HepG2 (cell line): ENCODE measurements at regions of chr20 and their contacts with region 1.

Region 1: GRCh38 chr20:35463455-35464300 is 8.3 kb downstream of the CEP250 start:
- DNase-seq: peak; percentile 84
- ATAC-seq: peak; percentile 79
- H3K4me3 ChIP-seq: no peak overlapping the region
- H3K27ac ChIP-seq: peak overlapping the region; percentile 14
- H3K4me1 ChIP-seq: peaks cover 42% of the 10 kb centered on the region
- H3K27me3 ChIP-seq: no peaks in the 10 kb centered on the region
- CTCF ChIP-seq: peak; percentile 95
- EP300 ChIP-seq: no peak
- POLR2A ChIP-seq: no peak
- RAD21 ChIP-seq: peak; percentile 92

Region 2: GRCh38 chr20:35200255-35200654 is 263.4 kb before region 1 on chr20:
- CTCF ChIA-PET with region 1: no interaction called
- POLR2A ChIA-PET with region 1: no interaction called
- in situ Hi-C with region 1: no loop called
- intact Hi-C with region 1: no loop called
- DNase-seq: no peak
- ATAC-seq: no peak
- H3K4me3 ChIP-seq: no peak overlapping the region
- H3K27ac ChIP-seq: no peak overlapping the region
- H3K4me1 ChIP-seq: no peaks in the 10 kb centered on the region
- H3K27me3 ChIP-seq: no peaks in the 10 kb centered on the region
- CTCF ChIP-seq: no peak
- EP300 ChIP-seq: no peak
- POLR2A ChIP-seq: no peak
- RAD21 ChIP-seq: no peak

Region 3: GRCh38 chr20:35447082-35447789 is 16.4 kb before region 1 on chr20:
- CTCF ChIA-PET with region 1: no interaction called
- POLR2A ChIA-PET with region 1: no interaction called
- in situ Hi-C with region 1: no loop called
- intact Hi-C with region 1: no loop called
- DNase-seq: peak; percentile 92
- ATAC-seq: peak; percentile 90
- H3K4me3 ChIP-seq: peak overlapping the region; percentile 51 to 61 (median 55)
- H3K27ac ChIP-seq: no peak overlapping the region
- H3K4me1 ChIP-seq: peaks cover 8% of the 10 kb centered on the region
- H3K27me3 ChIP-seq: no peaks in the 10 kb centered on the region; a peak in 2 of 5 replicates
- CTCF ChIP-seq: peak; percentile 95
- EP300 ChIP-seq: no peak
- POLR2A ChIP-seq: peak in 1 of 2 experiments; percentile 48; a peak in 2 of 4 replicates
- RAD21 ChIP-seq: peak; percentile 75

Region 4: DNA sequence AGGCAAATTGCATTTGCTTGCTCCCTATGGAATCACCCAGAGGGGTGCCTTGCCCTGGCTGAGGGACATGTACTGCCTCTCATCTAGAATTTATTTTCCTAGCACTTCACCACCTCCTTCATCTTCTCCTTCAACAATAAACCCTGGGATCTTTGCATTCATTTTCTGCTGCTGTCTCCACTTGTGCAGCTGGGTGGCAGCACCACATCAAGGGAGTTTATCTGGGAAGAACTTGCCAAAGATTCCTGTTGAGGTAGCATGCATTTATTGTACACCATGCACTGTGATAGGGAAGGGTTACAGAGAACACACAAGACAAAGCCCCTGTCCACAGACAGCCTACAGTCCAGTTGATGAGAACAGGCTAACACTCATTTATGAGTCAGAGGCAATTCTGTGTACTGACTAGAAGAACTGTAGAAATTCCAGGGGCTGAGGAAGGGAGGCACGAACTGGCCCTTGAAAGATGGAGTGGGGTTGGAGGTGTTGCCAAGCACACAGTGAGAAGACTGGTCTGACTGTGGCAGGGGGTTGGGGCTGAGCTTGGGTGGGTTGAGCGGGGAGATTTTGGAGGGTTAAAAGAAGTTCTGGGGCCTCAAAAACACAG is 48.2 kb after region 1 on chr20:
- CTCF ChIA-PET with region 1: no interaction called
- POLR2A ChIA-PET with region 1: interaction called, 3 read pairs
- in situ Hi-C with region 1: no loop called
- intact Hi-C with region 1: loop called (anchors 2 kb)
- DNase-seq: peak; percentile 53
- ATAC-seq: peak; percentile 32
- H3K4me3 ChIP-seq: no peak overlapping the region
- H3K27ac ChIP-seq: no peak overlapping the region
- H3K4me1 ChIP-seq: no peaks in the 10 kb centered on the region
- H3K27me3 ChIP-seq: no peaks in the 10 kb centered on the region
- CTCF ChIP-seq: peak; percentile 88
- EP300 ChIP-seq: no peak
- POLR2A ChIP-seq: no peak
- RAD21 ChIP-seq: peak; percentile 49; the same call in 1 of the 2 replicates

Region 5: DNA sequence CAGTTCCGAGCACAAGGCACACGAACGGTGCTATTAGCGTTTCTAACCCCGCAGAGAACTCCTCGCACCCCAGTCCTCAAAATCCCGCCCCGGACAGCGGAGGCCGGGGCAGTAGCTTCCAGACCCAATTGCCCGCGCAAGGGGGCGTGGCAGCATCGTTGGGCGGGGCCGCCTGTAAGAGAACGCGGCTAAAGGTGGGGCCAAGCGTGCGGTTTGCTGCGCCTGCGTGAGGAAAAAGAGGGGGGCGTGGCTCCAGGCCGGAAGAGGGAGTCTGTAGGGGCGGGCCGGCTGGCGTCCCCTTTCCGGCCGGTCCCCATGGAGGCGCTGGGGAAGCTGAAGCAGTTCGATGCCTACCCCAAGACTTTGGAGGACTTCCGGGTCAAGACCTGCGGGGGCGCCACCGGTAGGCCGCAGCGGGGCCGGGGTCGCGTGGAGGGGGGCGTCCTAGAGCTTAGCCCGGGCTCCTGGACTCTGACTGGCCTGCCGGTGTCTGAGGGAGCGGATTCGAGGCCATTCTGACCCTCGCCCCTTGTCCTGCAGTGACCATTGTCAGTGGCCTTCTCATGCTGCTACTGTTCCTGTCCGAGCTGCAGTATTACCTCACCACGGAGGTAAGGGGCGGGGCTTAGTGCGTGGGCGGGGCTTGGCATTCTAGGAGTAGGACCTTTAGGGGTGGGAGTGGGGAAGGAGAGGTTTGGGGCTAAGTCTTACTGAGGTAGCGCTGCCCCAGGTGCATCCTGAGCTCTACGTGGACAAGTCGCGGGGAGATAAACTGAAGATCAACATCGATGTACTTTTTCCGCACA is 78.3 kb after region 1 on chr20 and contains the start of gene ERGIC3:
- CTCF ChIA-PET with region 1: no interaction called
- POLR2A ChIA-PET with region 1: interaction called, 37 read pairs
- in situ Hi-C with region 1: no loop called
- intact Hi-C with region 1: loop called (anchors 5 kb)
- DNase-seq: peak; percentile 97
- ATAC-seq: peak; percentile 93
- H3K4me3 ChIP-seq: peak within 1 kb of the TSS; percentile 74 to 93 (median 79)
- H3K27ac ChIP-seq: peak within 1 kb of the TSS; percentile 85
- H3K4me1 ChIP-seq: peaks cover 29% of the 10 kb centered on the region
- H3K27me3 ChIP-seq: no peaks in the 10 kb centered on the region
- CTCF ChIP-seq: peak; percentile 43; the same call in 1 of the 2 replicates
- EP300 ChIP-seq: no peak
- POLR2A ChIP-seq: peak; percentile 82 to 92
- RAD21 ChIP-seq: no peak; the same call in 1 of the 2 replicates
- total RNA-seq, gene ERGIC3: 224 and 407 TPM in 2 replicates

Region 6: GRCh38 chr20:35619196-35620095 is 155.8 kb after region 1 on chr20:
- CTCF ChIA-PET with region 1: no interaction called
- POLR2A ChIA-PET with region 1: interaction called, 34 read pairs
- in situ Hi-C with region 1: no loop called
- intact Hi-C with region 1: loop called (anchors 2 kb)
- DNase-seq: peak; percentile 94
- ATAC-seq: peak; percentile 69
- H3K4me3 ChIP-seq: peak overlapping the region; percentile 59 to 96 (median 67)
- H3K27ac ChIP-seq: peak overlapping the region; percentile 0
- H3K4me1 ChIP-seq: peaks cover 26% of the 10 kb centered on the region
- H3K27me3 ChIP-seq: peaks cover 0 to 7% of the 10 kb centered on the region in 2 experiments; a peak in 1 of 5 replicates
- CTCF ChIP-seq: peak; percentile 93
- EP300 ChIP-seq: peak in 1 of 2 experiments; percentile 32; a peak in 1 of 4 replicates
- POLR2A ChIP-seq: peak in 1 of 2 experiments; percentile 74; a peak in 2 of 4 replicates
- RAD21 ChIP-seq: peak; percentile 78

Region 7: DNA sequence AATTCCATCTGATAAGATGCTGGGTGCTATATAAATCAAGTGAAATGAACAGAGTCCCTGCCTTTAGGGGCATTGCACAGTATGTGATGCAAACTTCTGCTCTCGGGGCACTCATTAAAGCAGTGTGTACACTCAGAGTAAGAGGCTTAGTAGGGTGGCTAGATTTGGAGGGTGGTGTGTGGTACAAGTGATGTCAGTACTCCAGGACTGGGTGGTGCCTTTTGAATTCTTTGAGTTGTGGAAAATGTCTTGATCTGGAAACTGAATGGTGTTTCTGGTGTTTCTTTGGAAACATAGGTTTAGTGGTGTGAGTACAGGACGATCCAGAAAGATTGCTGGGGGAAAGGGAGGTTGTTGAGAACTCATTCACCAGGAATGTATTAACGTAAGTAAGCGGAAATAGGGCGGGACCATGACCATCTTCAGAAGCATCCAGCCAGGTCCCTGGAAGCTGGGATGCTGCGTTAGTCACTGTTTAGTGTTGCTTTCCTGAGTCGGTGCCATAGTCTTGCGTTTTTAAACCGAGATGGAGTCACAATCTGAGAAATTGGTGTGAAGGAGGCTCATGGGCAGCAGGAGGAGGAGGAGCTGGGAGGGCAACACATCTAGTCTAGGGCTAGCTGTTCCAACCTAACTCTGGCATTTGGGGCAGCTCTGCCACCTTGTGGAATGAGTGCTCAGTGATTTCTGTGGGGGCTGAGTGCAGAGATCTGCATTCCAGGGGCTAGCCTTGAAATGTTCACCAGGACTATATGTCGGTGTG is 420.3 kb after region 1 on chr20:
- CTCF ChIA-PET with region 1: no interaction called
- POLR2A ChIA-PET with region 1: no interaction called
- in situ Hi-C with region 1: no loop called
- intact Hi-C with region 1: loop called (anchors 5 kb)
- DNase-seq: peak; percentile 82
- ATAC-seq: peak; percentile 99
- H3K4me3 ChIP-seq: no peak overlapping the region
- H3K27ac ChIP-seq: no peak overlapping the region
- H3K4me1 ChIP-seq: no peaks in the 10 kb centered on the region
- H3K27me3 ChIP-seq: no peaks in the 10 kb centered on the region
- CTCF ChIP-seq: peak; percentile 95
- EP300 ChIP-seq: no peak
- POLR2A ChIP-seq: no peak
- RAD21 ChIP-seq: peak; percentile 95